ENCODE measurements at regions of chr15 and their contacts with region 1.

Region 1: GRCh38 chr15:30991255-30992072 is at the start of gene MTMR10:
- DNase-seq: peak; percentile 83
- ATAC-seq: peak; percentile 97
- H3K4me3 ChIP-seq: peak within 1 kb of the TSS; percentile 86 to 90
- H3K27ac ChIP-seq: peak within 1 kb of the TSS; percentile 45 to 86
- H3K4me1 ChIP-seq: no peaks in the 10 kb centered on the region
- H3K27me3 ChIP-seq: no peaks in the 10 kb centered on the region
- total RNA-seq, gene MTMR10: 12.5 to 35.0 TPM

Region 2: DNA sequence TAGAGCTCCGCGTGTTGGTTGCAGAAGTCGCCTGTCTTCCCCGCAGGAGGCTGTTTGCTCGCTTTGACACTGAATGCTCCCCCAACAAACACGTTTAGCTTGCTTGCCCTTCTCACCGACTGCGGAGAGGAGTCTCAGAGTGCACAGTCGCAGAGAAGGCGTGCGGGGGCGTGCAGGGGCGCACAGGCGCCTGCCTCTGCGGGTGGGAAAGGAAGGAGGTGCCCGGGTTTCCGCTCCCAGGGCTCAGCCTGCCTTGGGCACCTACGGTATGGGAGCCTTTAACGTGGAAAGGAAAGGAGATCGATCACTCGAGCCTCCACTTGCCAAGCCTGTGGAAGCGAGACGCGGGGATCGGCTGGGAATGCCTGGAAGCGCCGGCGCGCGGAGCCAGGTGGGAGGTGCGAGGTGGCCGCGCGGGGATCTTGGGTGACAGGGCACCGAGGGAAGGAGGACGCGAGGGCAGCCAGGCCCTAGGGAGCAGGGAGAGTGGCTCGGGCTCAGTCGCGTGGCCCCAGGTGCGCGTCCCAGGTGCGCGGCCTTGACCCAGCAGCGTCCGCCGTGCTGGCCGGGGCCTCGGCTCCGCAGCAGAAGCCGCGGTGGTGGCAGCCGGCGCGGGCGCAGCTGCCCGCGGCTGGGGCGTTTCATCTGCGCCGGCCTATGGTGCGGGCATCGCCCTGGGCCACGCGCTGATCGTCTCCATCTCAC is 87.8 kb before region 1 on chr15 and contains the start of gene FAN1:
- intact Hi-C with region 1: loop called in 1 of 2 experiments (anchors 5 kb)
- DNase-seq: peak; percentile 90 to 92
- ATAC-seq: peak; percentile 98
- H3K4me3 ChIP-seq: peak within 1 kb of the TSS; percentile 46 to 85
- H3K27ac ChIP-seq: peak within 1 kb of the TSS in 1 of 2 donors; percentile 9
- H3K4me1 ChIP-seq: peaks cover 0 to 3% of the 10 kb centered on the region in 2 donors
- H3K27me3 ChIP-seq: no peaks in the 10 kb centered on the region
- total RNA-seq, gene FAN1: 4.3 to 15.9 TPM

Region 3: DNA sequence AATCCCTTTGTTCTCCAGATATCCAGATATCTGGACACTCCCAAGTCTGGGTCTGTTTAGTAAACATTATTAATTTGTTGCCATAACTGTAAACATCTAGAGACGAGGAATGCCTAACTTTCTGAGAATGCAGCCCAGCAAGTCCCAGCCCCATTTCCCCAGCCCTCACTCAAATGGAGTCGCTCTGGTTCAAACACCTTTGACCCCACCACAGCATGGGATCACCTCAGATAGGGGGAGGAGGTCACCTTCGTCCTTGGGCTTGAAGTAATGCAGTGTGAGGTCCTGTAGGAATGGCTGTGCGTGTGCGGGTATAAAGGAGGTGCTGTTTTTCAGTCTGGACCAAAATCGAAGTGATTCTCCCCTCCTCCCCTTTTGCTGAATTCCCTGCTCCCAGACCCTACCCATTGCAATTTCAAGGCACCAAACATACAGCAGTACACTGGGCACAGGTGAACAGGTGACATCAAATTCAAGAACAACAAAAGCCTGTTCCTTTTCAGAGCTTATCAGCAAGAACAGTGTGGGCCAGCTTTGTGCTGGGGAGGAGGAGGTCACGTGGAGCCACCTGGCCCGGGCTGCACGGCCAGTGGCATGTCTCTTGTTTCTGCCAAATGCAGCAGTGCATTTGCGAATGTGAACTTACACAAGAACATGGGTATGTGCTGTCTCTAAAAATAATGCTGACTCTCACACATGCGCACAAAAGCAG is 167.6 kb after region 1 on chr15:
- intact Hi-C with region 1: no loop called
- DNase-seq: no peak
- ATAC-seq: no peak
- H3K4me3 ChIP-seq: no peak overlapping the region
- H3K27ac ChIP-seq: no peak overlapping the region
- H3K4me1 ChIP-seq: no peaks in the 10 kb centered on the region
- H3K27me3 ChIP-seq: no peaks in the 10 kb centered on the region

Region 4: DNA sequence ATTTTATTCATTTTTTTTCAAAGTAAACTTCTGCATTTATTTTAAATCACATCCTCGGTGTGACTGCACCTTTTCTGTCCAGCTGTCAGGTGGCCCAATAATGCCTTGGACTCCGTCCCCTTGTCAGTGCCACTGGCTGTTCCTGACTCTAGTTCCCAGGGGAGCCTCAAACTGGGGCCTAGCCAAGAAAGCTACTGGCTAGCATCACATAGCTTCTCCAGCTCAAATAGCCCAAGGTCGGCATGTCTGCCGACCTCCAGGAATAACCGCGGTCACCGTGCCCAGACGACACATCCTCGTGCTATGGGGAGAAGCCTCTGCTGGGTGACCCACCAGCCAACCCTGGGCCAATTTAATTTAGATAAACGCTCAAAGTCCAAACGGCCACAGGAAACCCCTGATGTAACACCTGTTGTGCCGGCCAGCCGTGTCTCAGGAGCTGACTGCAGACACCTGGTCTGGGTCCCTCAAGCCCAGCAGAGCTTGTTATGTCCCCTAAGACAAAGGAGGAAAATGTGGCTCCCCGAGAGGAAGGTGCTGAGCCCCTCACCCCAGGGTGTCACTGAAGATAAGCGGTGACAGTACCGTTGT is 461.2 kb after region 1 on chr15:
- intact Hi-C with region 1: no loop called
- DNase-seq: no peak
- ATAC-seq: no peak
- H3K4me3 ChIP-seq: no peak overlapping the region
- H3K27ac ChIP-seq: no peak overlapping the region
- H3K4me1 ChIP-seq: no peaks in the 10 kb centered on the region
- H3K27me3 ChIP-seq: no peaks in the 10 kb centered on the region

Measured in aorta (tissue), 5 donors.